Activated CD4-positive, alpha-beta memory T cell treated with anti-CD3 and anti-CD28 coated beads, Interleukin-2, amount 10 ng/mL, durations not matched to agents 7 days and 5 days (primary cell): ENCODE measurements at regions of chr1 and their contacts with region 1.

Region 1: GRCh38 chr1:154183045-154183915 is 8.6 kb downstream of the TPM3 start:
- DNase-seq: peak; percentile 96
- H3K4me3 Mint-ChIP-seq: peak overlapping the region; percentile 99
- H3K27ac Mint-ChIP-seq: peak overlapping the region; percentile 99
- H3K4me1 Mint-ChIP-seq: peaks cover 45% of the 10 kb centered on the region
- H3K27me3 Mint-ChIP-seq: no peaks in the 10 kb centered on the region

Region 2: DNA sequence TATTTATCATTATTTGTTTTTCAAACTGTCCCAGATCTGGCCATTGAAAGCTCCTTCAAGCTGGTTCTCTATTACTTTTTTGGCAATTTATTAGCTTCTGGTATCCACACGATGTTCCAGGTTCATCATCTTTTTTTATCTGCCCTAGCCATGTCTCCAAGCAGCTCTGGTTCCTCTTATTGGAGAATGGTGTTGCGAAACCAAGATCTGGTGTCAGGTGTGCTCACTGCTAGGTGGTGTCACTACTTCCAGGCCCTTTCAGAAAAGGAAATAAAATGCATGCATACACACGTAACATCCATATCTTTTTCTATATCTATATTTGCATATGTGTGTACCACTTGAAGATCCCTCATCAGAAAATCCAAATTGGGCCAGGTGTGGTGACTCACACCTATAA is 313.8 kb before region 1 on chr1:
- CTCF ChIA-PET with region 1: no interaction called
- POLR2A ChIA-PET with region 1: no interaction called
- DNase-seq: no peak
- H3K4me3 Mint-ChIP-seq: no peak overlapping the region
- H3K27ac Mint-ChIP-seq: no peak overlapping the region
- H3K4me1 Mint-ChIP-seq: peaks cover 18% of the 10 kb centered on the region
- H3K27me3 Mint-ChIP-seq: no peaks in the 10 kb centered on the region

Region 3: GRCh38 chr1:154157520-154158306 is 25.6 kb before region 1 on chr1:
- CTCF ChIA-PET with region 1: interaction called, 5 read pairs
- POLR2A ChIA-PET with region 1: interaction called, 214 read pairs
- DNase-seq: peak; percentile 83
- H3K4me3 Mint-ChIP-seq: peak overlapping the region; percentile 49
- H3K27ac Mint-ChIP-seq: peak overlapping the region; percentile 92
- H3K4me1 Mint-ChIP-seq: peaks cover 59% of the 10 kb centered on the region
- H3K27me3 Mint-ChIP-seq: no peaks in the 10 kb centered on the region

Region 4: GRCh38 chr1:154170547-154171222 is 12.6 kb before region 1 on chr1:
- CTCF ChIA-PET with region 1: no interaction called
- POLR2A ChIA-PET with region 1: interaction called, 34 read pairs
- DNase-seq: peak; percentile 38
- H3K4me3 Mint-ChIP-seq: no peak overlapping the region
- H3K27ac Mint-ChIP-seq: peak overlapping the region; percentile 28
- H3K4me1 Mint-ChIP-seq: peaks cover 45% of the 10 kb centered on the region
- H3K27me3 Mint-ChIP-seq: no peaks in the 10 kb centered on the region

Region 5: GRCh38 chr1:154272217-154272998 is 89.1 kb after region 1 on chr1 and contains the start of gene HAX1:
- CTCF ChIA-PET with region 1: interaction called, 6 read pairs
- POLR2A ChIA-PET with region 1: interaction called, 14 read pairs
- DNase-seq: peak; percentile 98
- H3K4me3 Mint-ChIP-seq: peak within 1 kb of the TSS; percentile 91
- H3K27ac Mint-ChIP-seq: peak within 1 kb of the TSS; percentile 94
- H3K4me1 Mint-ChIP-seq: peaks cover 43% of the 10 kb centered on the region
- H3K27me3 Mint-ChIP-seq: no peaks in the 10 kb centered on the region
- total RNA-seq, gene HAX1: 141 to 142 TPM